ENCODE measurements at regions of chr6 and their contacts with region 1.

Region 1: GRCh38 chr6:63598049-63599036 is 26.1 kb downstream of the LOC128125822 start:
- H3K4me3 Mint-ChIP-seq: peak overlapping the region; percentile 74
- H3K27ac Mint-ChIP-seq: no peak overlapping the region
- H3K4me1 Mint-ChIP-seq: peaks cover 9% of the 10 kb centered on the region
- H3K27me3 Mint-ChIP-seq: peaks cover 5% of the 10 kb centered on the region

Region 2: DNA sequence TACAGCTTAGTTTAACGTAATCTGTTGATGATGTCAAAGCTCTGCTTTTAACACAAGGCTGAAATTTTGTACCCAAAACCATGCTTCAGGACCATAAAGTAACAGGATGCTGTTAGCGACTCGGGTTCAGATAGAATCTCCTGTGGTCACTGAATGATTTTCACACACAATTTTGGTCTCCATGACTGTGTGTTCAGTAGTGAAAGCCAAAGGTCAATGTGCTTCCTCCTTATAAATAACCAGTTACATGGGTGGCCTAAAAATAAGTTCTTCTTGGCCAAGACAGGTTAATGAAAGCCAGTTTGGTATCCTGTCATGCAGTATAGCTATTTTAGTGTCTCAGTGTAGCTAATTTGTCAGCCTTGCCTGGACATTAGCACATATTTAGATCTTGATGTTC is 45.1 kb before region 1 on chr6:
- intact Hi-C with region 1: no loop called
- H3K4me3 Mint-ChIP-seq: no peak overlapping the region
- H3K27ac Mint-ChIP-seq: no peak overlapping the region
- H3K4me1 Mint-ChIP-seq: no peaks in the 10 kb centered on the region
- H3K27me3 Mint-ChIP-seq: peaks cover 2% of the 10 kb centered on the region

Region 3: GRCh38 chr6:63635588-63636517 is 37.5 kb after region 1 on chr6 and contains the start of gene PHF3:
- intact Hi-C with region 1: loop called (anchors 5 kb)
- H3K4me3 Mint-ChIP-seq: peak within 1 kb of the TSS; percentile 91
- H3K27ac Mint-ChIP-seq: peak within 1 kb of the TSS; percentile 98
- H3K4me1 Mint-ChIP-seq: peaks cover 44% of the 10 kb centered on the region
- H3K27me3 Mint-ChIP-seq: no peaks in the 10 kb centered on the region

Region 4: GRCh38 chr6:63690221-63690620 is 91.9 kb after region 1 on chr6:
- intact Hi-C with region 1: loop called (anchors 5 kb)
- H3K4me3 Mint-ChIP-seq: no peak overlapping the region
- H3K27ac Mint-ChIP-seq: no peak overlapping the region
- H3K4me1 Mint-ChIP-seq: peaks cover 8% of the 10 kb centered on the region
- H3K27me3 Mint-ChIP-seq: no peaks in the 10 kb centered on the region

Region 5: DNA sequence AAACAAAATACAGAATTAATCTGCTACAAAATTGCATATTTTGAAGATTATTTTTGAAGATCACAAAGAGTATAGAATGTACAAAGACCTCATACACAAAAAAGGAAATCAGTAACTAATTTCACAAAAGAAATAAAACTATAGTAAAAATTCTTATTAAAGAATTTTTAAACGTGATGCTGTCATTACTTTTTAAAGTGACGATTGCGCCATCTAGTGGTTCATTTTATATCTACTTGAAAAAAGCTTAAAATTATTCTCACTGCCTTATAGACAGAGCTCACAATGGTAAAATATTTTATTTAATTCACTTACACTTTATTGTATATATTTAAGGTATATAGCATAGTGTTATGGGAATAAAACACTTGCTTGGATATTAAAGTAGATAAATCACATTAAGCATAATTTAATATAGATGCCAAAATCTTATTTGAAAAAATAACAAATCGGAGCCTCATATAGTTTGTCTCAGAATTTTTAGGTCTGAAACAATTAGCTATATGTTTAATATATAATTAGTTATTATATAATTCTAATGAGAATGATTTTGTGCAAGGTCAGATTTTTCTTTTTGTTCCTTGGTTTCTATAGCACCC is 166.1 kb after region 1 on chr6:
- intact Hi-C with region 1: loop called (anchors 2 kb)
- H3K4me3 Mint-ChIP-seq: no peak overlapping the region
- H3K27ac Mint-ChIP-seq: no peak overlapping the region
- H3K4me1 Mint-ChIP-seq: no peaks in the 10 kb centered on the region
- H3K27me3 Mint-ChIP-seq: no peaks in the 10 kb centered on the region

Measured in dendritic cell treated with granulocyte-macrophage colony-stimulating factor and Interleukin-4, amounts not matched to agents 40 ng/mL and 50 ng/mL, for 4 days (primary cell).